Natural killer cell (primary cell): ENCODE measurements at regions of chr2 and their contacts with region 1.

Region 1: DNA sequence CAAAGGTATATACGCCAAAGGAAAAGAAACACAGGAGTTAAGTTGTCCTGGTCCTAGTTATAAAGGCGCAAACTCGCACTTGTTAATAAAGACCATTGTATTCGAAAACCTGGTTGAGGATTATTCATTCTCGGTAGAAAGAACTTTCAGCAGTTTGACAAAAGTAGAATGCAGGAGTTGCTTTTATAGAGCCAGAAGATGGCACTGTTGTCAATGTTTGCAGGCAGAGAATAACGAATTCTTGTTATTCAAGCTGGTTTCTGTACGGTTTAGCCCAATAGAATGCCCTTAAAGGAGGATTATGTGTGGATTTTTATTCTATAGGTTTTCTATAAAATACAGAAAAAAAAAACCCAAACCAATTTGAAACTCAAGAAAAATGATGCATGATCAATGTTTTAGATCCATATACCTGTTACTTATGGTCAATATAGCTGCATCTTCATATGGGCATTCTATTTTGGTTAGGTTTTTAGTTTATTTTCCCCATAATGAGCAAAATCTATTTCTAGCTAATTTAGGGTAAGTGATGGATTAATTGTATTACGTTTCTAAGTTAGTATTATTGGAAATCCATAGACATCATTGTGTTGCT is 510.3 kb downstream of the PLCL1 start:
- DNase-seq: peak in 1 of 2 donors; percentile 70
- ATAC-seq: peak in 1 of 3 donors; percentile 35
- H3K4me3 ChIP-seq: no peak overlapping the region
- H3K4me3 Mint-ChIP-seq: no peak overlapping the region
- H3K27ac ChIP-seq: no peak overlapping the region
- H3K27ac Mint-ChIP-seq: no peak overlapping the region
- H3K4me1 ChIP-seq: no peaks in the 10 kb centered on the region
- H3K4me1 Mint-ChIP-seq: no peaks in the 10 kb centered on the region
- H3K27me3 ChIP-seq: peaks cover 7% of the 10 kb centered on the region
- H3K27me3 Mint-ChIP-seq: peaks cover 17 to 29% of the 10 kb centered on the region in 2 donors
- CTCF ChIP-seq: peak; percentile 57

Region 2: DNA sequence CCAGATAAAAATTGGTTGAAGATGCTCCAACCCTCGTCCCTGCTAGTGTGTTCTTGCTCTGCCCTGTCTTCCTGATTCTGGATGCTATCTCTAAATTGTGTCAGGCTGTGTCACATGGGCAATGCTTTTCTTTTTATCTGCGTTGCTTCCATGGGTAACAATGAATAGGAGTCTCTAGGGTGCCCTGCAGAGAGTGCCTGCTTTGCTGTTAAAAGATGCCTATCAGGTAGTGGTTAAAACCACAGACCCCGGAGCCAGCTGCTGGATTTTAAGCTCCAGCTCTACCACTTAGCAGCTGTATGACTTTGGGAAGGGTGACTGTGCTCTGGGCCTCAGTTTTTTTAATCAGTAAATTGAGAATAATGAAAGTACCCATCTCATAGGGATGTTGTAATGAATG is 170.0 kb before region 1 on chr2:
- intact Hi-C with region 1: no loop called
- DNase-seq: no peak
- ATAC-seq: no peak
- H3K4me3 ChIP-seq: no peak overlapping the region
- H3K4me3 Mint-ChIP-seq: no peak overlapping the region
- H3K27ac ChIP-seq: no peak overlapping the region
- H3K27ac Mint-ChIP-seq: no peak overlapping the region
- H3K4me1 ChIP-seq: no peaks in the 10 kb centered on the region
- H3K4me1 Mint-ChIP-seq: no peaks in the 10 kb centered on the region
- H3K27me3 ChIP-seq: no peaks in the 10 kb centered on the region
- H3K27me3 Mint-ChIP-seq: no peaks in the 10 kb centered on the region
- CTCF ChIP-seq: no peak

Region 3: GRCh38 chr2:199488772-199489400 is 1174.2 kb after region 1 on chr2:
- intact Hi-C with region 1: loop called (anchors 1 kb)
- DNase-seq: peak in 1 of 2 donors; percentile 68
- ATAC-seq: peak in 2 of 3 donors; percentile 49 to 52
- H3K4me3 ChIP-seq: no peak overlapping the region
- H3K4me3 Mint-ChIP-seq: no peak overlapping the region
- H3K27ac ChIP-seq: no peak overlapping the region
- H3K27ac Mint-ChIP-seq: no peak overlapping the region
- H3K4me1 ChIP-seq: no peaks in the 10 kb centered on the region
- H3K4me1 Mint-ChIP-seq: no peaks in the 10 kb centered on the region
- H3K27me3 ChIP-seq: no peaks in the 10 kb centered on the region
- H3K27me3 Mint-ChIP-seq: peaks cover 3 to 18% of the 10 kb centered on the region in 2 donors
- CTCF ChIP-seq: peak; percentile 34

Region 4: GRCh38 chr2:199739413-199740110 is 1424.9 kb after region 1 on chr2:
- intact Hi-C with region 1: loop called (anchors 1 kb)
- DNase-seq: peak; percentile 47 to 67
- ATAC-seq: peak in 2 of 3 donors; percentile 55 to 58
- H3K4me3 ChIP-seq: no peak overlapping the region
- H3K4me3 Mint-ChIP-seq: no peak overlapping the region
- H3K27ac ChIP-seq: no peak overlapping the region
- H3K27ac Mint-ChIP-seq: no peak overlapping the region
- H3K4me1 ChIP-seq: peaks cover 3% of the 10 kb centered on the region
- H3K4me1 Mint-ChIP-seq: peaks cover 6 to 7% of the 10 kb centered on the region in 2 donors
- H3K27me3 ChIP-seq: no peaks in the 10 kb centered on the region
- H3K27me3 Mint-ChIP-seq: peaks cover 10 to 36% of the 10 kb centered on the region in 2 donors
- CTCF ChIP-seq: peak; percentile 93